Right lobe of liver (tissue), 6 donors: ENCODE measurements at regions of chr1 and their contacts with region 1.

Region 1: GRCh38 chr1:46983830-46984586 is 39.5 kb upstream of the CYP4X1 start:
- DNase-seq: no peak
- ATAC-seq: no peak
- H3K4me3 ChIP-seq: no peak overlapping the region
- H3K27ac ChIP-seq: no peak overlapping the region
- H3K4me1 ChIP-seq: no peaks in the 10 kb centered on the region
- H3K27me3 ChIP-seq: no peaks in the 10 kb centered on the region
- CTCF ChIP-seq: no peak
- POLR2A ChIP-seq: no peak

Region 2: GRCh38 chr1:46489638-46490405 is 494.2 kb before region 1 on chr1 and contains the start of gene DMBX1:
- intact Hi-C with region 1: loop called in 1 of 2 experiments (anchors 10 kb)
- DNase-seq: peak in 2 of 3 donors; percentile 11 to 38
- ATAC-seq: peak; percentile 57 to 76 (median 68)
- H3K4me3 ChIP-seq: peak within 1 kb of the TSS in 2 of 3 donors; percentile 6 to 21
- H3K27ac ChIP-seq: no peak within 1 kb of the TSS
- H3K4me1 ChIP-seq: peaks cover 0 to 3% (median 0%) of the 10 kb centered on the region in 4 donors
- H3K27me3 ChIP-seq: peaks cover 4 to 44% of the 10 kb centered on the region in 2 donors
- CTCF ChIP-seq: no peak
- POLR2A ChIP-seq: no peak
- total RNA-seq, gene DMBX1: not detected